Natural killer cell (primary cell): ENCODE measurements at regions of chr21 and their contacts with region 1.

Region 1: DNA sequence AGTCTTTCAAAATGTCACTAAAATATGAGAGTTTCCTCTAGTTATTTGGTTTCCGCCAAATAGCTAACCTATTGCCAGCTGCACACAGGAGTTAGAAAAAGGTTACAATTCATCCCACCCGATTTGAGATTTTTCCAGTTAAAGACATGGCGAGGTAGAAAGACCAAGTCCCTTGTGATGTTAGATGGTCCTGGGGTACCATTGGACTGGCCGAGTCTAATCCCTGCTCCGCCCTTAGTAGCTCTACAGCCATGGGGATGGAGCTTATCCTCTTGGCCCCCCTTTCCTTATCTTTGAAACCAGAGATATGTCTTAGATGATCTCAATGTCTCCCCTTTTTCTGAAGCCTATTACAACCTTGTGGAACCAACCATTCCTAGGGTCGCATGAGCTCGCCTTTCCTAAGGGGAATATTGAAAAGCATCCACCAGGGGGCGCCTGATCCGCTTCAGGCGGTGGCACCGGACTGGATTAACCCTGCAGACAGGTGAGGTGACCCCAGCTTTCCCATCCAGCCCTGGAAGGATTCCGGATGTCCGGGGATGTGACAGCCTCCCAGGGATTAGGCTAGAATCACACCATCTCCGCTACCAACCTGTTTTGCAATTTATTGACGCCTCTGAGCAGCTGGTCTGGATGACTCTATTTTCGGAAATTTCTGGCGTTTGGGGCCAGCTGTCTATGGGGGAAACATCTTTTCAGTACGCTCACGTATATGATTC is 68.3 kb upstream of the SIM2 start:
- DNase-seq: peak; percentile 37 to 72
- ATAC-seq: peak in 2 of 3 donors; percentile 44 to 60
- H3K4me3 ChIP-seq: no peak overlapping the region
- H3K4me3 Mint-ChIP-seq: no peak overlapping the region
- H3K27ac ChIP-seq: no peak overlapping the region
- H3K27ac Mint-ChIP-seq: no peak overlapping the region
- H3K4me1 ChIP-seq: no peaks in the 10 kb centered on the region
- H3K4me1 Mint-ChIP-seq: no peaks in the 10 kb centered on the region
- H3K27me3 ChIP-seq: no peaks in the 10 kb centered on the region
- H3K27me3 Mint-ChIP-seq: peaks cover 3 to 34% of the 10 kb centered on the region in 2 donors
- CTCF ChIP-seq: peak; percentile 76

Region 2: DNA sequence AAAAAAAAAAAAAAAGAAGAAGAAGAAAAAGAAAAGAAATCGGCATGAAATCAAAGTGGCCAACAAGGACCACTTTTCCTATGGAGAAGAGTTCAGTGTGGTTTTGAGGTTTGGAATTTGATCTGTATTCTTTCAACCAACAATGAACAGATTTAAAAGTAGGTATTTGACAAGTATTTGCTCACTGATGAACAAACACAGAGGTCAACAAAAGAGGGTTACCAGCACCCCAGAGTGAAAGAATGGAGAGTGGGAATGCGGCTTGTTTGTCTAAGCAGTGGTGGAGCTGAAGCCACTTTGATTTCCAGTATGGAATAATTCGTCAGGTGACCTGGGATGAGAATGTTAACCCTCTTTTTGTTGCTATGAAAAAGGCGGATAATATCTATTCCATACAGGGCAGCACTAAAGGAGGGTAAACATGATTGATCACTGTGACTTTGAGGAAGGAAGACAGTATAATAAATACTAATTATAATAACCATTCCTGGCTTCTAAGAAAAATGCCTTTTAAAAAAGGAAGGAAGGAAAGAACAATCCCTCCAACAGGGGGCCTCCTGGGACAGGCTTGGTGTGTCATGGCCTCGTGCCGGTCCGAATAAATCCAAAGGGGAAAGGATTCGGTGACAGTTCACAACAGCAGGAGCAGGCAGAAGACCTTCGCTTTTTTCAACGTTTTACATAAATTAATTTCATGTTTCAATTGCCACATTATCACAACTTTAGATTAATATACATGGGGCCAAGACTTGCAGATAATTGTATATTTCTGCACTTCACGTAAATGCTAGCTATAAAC is 31.1 kb after region 1 on chr21:
- intact Hi-C with region 1: no loop called
- DNase-seq: no peak
- ATAC-seq: no peak
- H3K4me3 ChIP-seq: no peak overlapping the region
- H3K4me3 Mint-ChIP-seq: no peak overlapping the region
- H3K27ac ChIP-seq: no peak overlapping the region
- H3K27ac Mint-ChIP-seq: no peak overlapping the region
- H3K4me1 ChIP-seq: no peaks in the 10 kb centered on the region
- H3K4me1 Mint-ChIP-seq: no peaks in the 10 kb centered on the region
- H3K27me3 ChIP-seq: peaks cover 5% of the 10 kb centered on the region
- H3K27me3 Mint-ChIP-seq: peaks cover 16 to 18% of the 10 kb centered on the region in 2 donors
- CTCF ChIP-seq: no peak

Region 3: DNA sequence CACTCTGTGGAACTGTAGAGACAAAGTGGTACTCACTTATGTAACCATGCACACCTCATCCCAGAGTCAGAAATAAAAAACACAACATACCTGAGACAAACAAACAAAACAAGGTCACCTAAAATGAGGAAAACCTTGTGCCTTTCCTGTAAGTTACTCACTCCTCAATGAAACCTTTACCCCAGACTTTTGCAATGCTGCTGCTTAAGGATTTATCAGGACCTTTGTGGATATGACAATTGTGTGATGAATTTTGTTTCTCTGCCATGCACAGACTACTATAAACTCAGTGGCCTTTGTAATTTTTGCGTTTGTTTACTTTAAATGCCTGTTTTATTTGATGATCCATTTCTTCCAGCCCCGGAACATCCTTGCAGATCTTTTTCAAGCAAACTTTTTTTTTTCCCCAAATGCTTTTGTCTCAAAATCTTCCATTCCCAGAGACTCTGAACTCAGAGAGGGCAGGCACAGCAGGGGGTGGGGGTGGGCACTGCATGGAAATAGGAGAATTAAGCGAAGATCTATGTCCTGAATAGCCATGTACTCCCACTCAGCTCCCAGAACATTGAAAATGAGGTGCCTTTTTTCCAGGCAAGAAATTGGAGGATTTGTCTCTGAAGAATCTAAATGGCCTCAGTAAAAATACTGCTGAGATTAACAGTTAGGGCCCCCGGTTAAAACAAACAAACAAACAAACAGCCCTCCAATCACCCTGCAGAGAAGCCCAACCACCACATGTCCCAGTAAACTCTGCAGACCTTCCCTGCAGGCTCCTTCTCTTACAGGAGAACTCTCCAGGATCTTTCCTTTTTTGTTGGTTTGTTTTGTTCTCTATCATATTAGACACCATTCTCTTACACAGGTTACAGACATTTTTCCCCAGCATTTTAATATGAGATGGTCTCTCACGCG is 45.6 kb after region 1 on chr21:
- intact Hi-C with region 1: no loop called
- DNase-seq: no peak
- ATAC-seq: no peak
- H3K4me3 ChIP-seq: no peak overlapping the region
- H3K4me3 Mint-ChIP-seq: no peak overlapping the region
- H3K27ac ChIP-seq: no peak overlapping the region
- H3K27ac Mint-ChIP-seq: no peak overlapping the region
- H3K4me1 ChIP-seq: no peaks in the 10 kb centered on the region
- H3K4me1 Mint-ChIP-seq: no peaks in the 10 kb centered on the region
- H3K27me3 ChIP-seq: peaks cover 5% of the 10 kb centered on the region
- H3K27me3 Mint-ChIP-seq: peaks cover 34 to 72% of the 10 kb centered on the region in 2 donors
- CTCF ChIP-seq: no peak

Region 4: GRCh38 chr21:37009740-37010341 is 379.2 kb after region 1 on chr21:
- intact Hi-C with region 1: loop called (anchors 5 kb)
- DNase-seq: peak; percentile 68 to 87
- ATAC-seq: peak; percentile 88 to 96 (median 96)
- H3K4me3 ChIP-seq: no peak overlapping the region
- H3K4me3 Mint-ChIP-seq: peak overlapping the region; percentile 49
- H3K27ac ChIP-seq: no peak overlapping the region
- H3K27ac Mint-ChIP-seq: no peak overlapping the region
- H3K4me1 ChIP-seq: peaks cover 19% of the 10 kb centered on the region
- H3K4me1 Mint-ChIP-seq: peaks cover 5 to 7% of the 10 kb centered on the region in 2 donors
- H3K27me3 ChIP-seq: peaks cover 19% of the 10 kb centered on the region
- H3K27me3 Mint-ChIP-seq: peaks cover 25 to 30% of the 10 kb centered on the region in 2 donors
- CTCF ChIP-seq: peak; percentile 79